ENCODE measurements at regions of chr11 and their contacts with region 1.

Region 1: GRCh38 chr11:62753736-62754603 is at the start of gene ZBTB3:
- DNase-seq: peak; percentile 93 to 100 (median 96)
- ATAC-seq: peak; percentile 95 to 96
- H3K4me3 Mint-ChIP-seq: peak within 1 kb of the TSS; percentile 91 to 100 (median 97)
- H3K27ac Mint-ChIP-seq: peak within 1 kb of the TSS; percentile 88 to 100 (median 99)
- H3K4me1 Mint-ChIP-seq: peaks cover 8 to 43% (median 28%) of the 10 kb centered on the region in 4 donors
- H3K27me3 Mint-ChIP-seq: no peaks in the 10 kb centered on the region
- polyA plus RNA-seq, gene ZBTB3: 2.1 to 6.7 (median 3.6) TPM

Region 2: DNA sequence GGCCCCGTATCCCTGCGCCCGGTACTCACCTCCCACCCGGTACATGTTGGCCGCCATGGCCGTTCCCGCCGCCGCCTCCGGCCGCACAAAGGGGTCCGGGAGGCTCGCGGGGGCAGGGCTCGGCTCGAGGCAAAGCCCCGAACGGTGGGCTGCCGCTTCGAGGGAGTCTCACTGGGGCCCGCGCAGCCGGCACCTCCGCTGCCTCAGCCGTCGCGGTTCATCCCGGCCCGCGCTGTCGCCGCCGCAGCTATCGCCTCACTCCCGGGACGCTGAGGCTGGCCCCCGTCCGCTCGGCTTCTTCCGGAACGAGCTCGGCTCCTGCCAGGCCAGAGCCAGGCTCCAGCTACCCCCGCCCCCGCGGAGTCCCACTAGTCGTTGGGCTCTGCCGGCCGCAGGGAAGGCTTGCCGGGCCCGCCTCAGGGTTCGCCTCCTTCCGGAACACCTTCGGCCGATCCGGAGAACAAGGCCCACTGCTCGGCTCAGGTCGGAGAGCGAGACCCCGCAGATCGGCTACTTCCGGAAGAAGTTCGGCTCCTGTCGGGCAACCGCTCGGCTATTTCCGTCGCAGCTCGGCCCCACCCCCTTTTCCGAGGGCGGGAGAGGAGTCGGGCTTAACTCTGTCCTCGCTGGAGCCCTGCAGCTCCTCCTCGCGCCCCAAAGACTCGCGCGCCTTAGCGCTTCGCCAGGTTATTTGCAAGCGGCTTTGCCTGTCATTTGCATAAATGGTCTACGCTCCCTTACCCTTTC is 152.4 kb before region 1 on chr11 and contains the start of gene MTA2:
- POLR2A ChIA-PET with region 1: no interaction called
- DNase-seq: peak; percentile 95 to 100 (median 99)
- ATAC-seq: peak; percentile 82 to 83
- H3K4me3 Mint-ChIP-seq: peak within 1 kb of the TSS; percentile 88 to 95 (median 92)
- H3K27ac Mint-ChIP-seq: peak within 1 kb of the TSS; percentile 93 to 97 (median 96)
- H3K4me1 Mint-ChIP-seq: peaks cover 37 to 66% (median 62%) of the 10 kb centered on the region in 4 donors
- H3K27me3 Mint-ChIP-seq: no peaks in the 10 kb centered on the region
- polyA plus RNA-seq, gene MTA2: 15.8 to 32.6 (median 21.5) TPM

Region 3: GRCh38 chr11:62671575-62672389 is 82.2 kb before region 1 on chr11 and contains the starts of genes LBHD1 and UQCC3:
- POLR2A ChIA-PET with region 1: interaction called, 13 read pairs
- DNase-seq: peak; percentile 52 to 85 (median 68)
- ATAC-seq: peak; percentile 75 to 76
- H3K4me3 Mint-ChIP-seq: peak within 1 kb of the TSS; percentile 96 to 100 (median 98)
- H3K27ac Mint-ChIP-seq: peak within 1 kb of the TSS; percentile 92 to 99 (median 96)
- H3K4me1 Mint-ChIP-seq: peaks cover 22 to 67% (median 50%) of the 10 kb centered on the region in 4 donors
- H3K27me3 Mint-ChIP-seq: no peaks in the 10 kb centered on the region
- polyA plus RNA-seq, gene LBHD1: 2.4 to 8.3 (median 4.4) TPM
- polyA plus RNA-seq, gene UQCC3: 9.1 to 9.7 (median 9.6) TPM

Region 4: GRCh38 chr11:62787005-62787759 is 33.2 kb after region 1 on chr11 and contains the start of gene TMEM179B:
- POLR2A ChIA-PET with region 1: interaction called, 61 read pairs
- DNase-seq: peak; percentile 90 to 99 (median 97)
- ATAC-seq: peak; percentile 69 to 73
- H3K4me3 Mint-ChIP-seq: peak within 1 kb of the TSS; percentile 90 to 96 (median 96)
- H3K27ac Mint-ChIP-seq: peak within 1 kb of the TSS; percentile 92 to 98 (median 96)
- H3K4me1 Mint-ChIP-seq: peaks cover 14 to 53% (median 46%) of the 10 kb centered on the region in 4 donors
- H3K27me3 Mint-ChIP-seq: no peaks in the 10 kb centered on the region
- polyA plus RNA-seq, gene TMEM179B: 109 to 126 (median 122) TPM

Region 5: DNA sequence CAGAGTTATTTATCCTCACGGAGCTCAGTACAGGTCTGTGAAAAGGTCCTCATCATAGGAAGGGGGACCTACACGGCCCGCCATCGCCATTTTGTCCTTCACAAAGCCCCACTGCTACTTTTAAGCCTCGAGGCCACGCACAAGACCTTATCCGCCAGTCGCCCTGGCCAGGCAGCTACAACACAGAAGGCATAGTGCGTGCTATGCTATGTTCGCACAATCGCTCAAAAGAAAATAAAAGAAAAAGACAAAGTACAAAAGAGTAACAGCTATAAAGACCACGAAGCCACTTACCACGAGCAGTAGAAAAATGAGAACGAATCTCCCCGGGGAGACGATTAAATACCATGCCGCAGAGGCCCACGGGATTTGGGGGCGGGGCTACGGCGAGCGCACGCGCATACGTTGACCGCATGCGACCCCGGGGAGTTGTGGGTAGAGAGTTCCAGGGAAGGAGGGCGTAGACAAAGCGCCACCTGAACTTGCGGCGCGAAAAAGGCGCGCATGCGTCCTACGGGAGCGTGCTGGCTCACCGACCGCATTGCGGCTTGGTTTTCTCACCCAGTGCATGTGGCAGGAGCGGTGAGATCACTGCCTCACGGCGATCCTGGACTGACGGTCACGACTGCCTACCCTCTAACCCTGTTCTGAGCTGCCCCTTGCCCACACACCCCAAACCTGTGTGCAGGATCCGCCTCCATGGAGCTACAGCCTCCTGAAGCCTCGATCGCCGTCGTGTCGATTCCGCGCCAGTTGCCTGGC is 101.8 kb after region 1 on chr11:
- POLR2A ChIA-PET with region 1: interaction called, 30 read pairs
- DNase-seq: peak; percentile 94 to 99 (median 98)
- ATAC-seq: peak; percentile 87 to 90
- H3K4me3 Mint-ChIP-seq: peak overlapping the region; percentile 95 to 99 (median 98)
- H3K27ac Mint-ChIP-seq: peak overlapping the region; percentile 88 to 99 (median 98)
- H3K4me1 Mint-ChIP-seq: peaks cover 33 to 54% (median 52%) of the 10 kb centered on the region in 4 donors
- H3K27me3 Mint-ChIP-seq: peaks cover 0 to 4% (median 0%) of the 10 kb centered on the region in 5 donors